Mammary epithelial cell (primary cell): ENCODE measurements at regions of chr20 and their contacts with region 1.

Region 1: DNA sequence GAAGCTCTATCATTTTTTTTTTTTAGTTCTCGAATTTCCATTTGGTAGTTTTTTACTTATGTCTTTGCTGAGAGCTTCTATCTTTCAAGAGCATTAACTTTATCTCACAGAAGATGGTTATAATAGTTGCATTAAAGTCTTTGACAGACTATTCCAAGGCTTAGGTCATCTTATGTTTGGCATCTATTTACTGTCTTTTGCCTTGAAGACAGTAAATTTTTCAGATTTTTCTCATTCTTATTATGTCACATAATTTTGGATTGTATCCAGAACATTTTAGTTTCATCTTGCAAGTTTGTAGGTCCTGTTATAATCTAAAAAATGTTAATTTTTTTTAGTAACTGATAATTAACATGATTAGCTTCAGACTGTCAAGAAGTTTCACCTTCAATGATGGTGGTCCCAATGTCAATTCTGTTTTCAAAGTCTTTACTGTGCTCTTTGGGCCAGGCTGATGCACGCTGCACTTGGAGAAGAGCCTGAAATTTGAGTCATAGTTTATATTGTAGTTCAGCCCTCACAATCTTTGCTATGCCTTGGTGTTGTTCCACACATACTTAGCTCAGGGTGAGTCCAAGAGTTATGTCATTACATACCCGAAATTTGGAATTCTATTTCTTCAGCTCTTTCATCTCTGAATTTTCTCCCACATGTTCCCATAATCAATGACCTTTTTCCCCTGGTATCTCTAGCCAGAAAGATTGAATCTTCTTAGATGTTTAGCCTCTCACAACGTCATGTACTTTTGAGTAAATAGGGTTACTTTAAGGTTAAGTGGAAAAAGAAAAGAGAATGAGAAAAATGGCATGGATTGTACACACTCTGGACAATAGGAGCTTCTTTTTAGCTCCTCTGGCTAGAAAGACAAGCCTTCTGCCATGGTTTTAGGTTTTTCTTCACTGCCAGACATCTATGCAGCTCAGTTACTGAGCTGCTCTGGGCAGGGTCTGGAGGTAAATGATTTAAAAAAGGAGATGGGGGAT is 110.3 kb upstream of the BTBD3 start:
- DNase-seq: peak; percentile 63
- H3K4me3 ChIP-seq: no peak overlapping the region
- H3K27ac ChIP-seq: no peak overlapping the region
- H3K4me1 ChIP-seq: peaks cover 30% of the 10 kb centered on the region
- H3K27me3 ChIP-seq: no peaks in the 10 kb centered on the region
- CTCF ChIP-seq: no peak

Region 2: DNA sequence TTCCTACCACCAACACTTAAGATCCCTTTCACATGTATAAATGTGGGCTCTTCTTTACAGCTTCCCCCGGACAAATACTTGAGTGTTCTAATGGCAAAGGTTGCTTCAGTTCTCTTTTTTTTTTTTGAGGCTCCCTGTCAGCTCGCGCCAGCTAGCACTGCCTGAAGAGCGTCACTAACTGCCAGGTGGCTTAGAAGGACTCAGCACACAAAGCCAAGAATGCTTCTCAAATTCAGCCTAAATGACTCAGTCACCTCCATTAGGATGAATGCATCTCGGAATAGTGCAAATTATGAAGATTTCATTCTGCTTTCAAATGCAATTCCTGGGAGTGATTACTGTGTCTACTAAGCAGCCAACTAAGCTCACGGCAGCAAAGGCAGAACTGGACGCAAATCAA is 40.4 kb before region 1 on chr20:
- CTCF ChIA-PET with region 1: no interaction called
- dilution Hi-C with region 1: no loop called
- in situ Hi-C with region 1: no loop called
- intact Hi-C with region 1: loop called (anchors 2 kb)
- DNase-seq: no peak
- H3K4me3 ChIP-seq: no peak overlapping the region
- H3K27ac ChIP-seq: no peak overlapping the region
- H3K4me1 ChIP-seq: peaks cover 4% of the 10 kb centered on the region
- H3K27me3 ChIP-seq: no peaks in the 10 kb centered on the region
- CTCF ChIP-seq: no peak

Region 3: DNA sequence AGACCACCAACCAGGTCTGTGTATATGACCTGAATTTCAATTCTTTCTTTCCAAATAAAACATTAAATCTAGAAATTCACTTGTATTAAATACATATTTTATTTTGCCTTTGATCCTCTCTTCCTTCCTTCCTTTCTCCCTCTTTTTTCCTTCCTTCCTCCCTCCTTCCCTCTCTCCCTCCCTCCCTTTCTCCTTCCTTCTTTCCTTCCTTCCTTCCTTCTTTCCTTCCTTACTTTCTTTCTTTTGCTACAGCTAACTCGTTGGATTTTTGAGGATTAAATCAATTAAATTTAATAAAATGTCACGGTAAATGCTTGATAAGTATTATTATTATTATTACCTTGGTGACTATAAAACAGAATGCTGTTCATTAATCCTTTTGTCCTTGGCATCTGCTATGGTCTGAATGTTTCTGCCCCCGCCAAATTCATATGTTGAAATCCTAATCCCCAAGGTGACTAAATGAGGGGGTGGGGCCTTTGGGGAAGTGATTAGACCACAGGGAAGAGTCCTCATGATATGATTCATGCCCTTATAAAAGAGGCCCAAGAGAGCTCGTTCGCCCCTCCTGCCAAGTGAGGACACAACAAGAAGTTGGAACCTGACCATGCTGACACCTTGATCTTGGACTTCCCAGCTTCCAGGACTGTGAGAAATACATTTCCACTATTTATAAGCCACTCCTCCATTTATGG is 42.8 kb after region 1 on chr20:
- CTCF ChIA-PET with region 1: no interaction called
- dilution Hi-C with region 1: no loop called
- in situ Hi-C with region 1: no loop called
- intact Hi-C with region 1: loop called (anchors 1 kb)
- DNase-seq: peak; percentile 93
- H3K4me3 ChIP-seq: peak overlapping the region in 2 of 3 experiments; percentile 39 to 41
- H3K27ac ChIP-seq: peak overlapping the region; percentile 89
- H3K4me1 ChIP-seq: peaks cover 43% of the 10 kb centered on the region
- H3K27me3 ChIP-seq: no peaks in the 10 kb centered on the region
- CTCF ChIP-seq: no peak

Region 4: DNA sequence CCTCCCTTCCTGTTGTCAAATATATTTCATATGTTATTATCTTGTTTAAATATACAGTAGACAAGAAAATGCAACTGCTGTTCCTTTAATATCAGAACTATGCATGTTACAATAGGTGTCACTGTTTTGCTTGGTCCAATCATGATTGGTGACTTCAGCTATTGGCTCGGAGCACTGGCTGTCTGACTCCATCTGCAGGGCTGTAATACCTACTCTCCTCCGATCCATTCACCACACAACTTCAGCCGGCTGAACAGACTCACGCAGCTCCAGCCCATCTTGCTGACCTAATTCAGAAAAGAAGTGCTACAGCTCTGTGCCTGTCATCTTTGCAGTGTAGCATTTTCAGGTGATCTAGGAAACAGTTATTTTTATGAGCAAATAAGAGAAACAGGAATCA is 110.3 kb after region 1 on chr20 and contains the start of gene BTBD3:
- CTCF ChIA-PET with region 1: no interaction called
- dilution Hi-C with region 1: no loop called
- in situ Hi-C with region 1: no loop called
- intact Hi-C with region 1: loop called (anchors 5 kb)
- DNase-seq: peak; percentile 83
- H3K4me3 ChIP-seq: peak within 1 kb of the TSS; percentile 22 to 33 (median 24)
- H3K27ac ChIP-seq: peak within 1 kb of the TSS; percentile 47
- H3K4me1 ChIP-seq: peaks cover 51% of the 10 kb centered on the region
- H3K27me3 ChIP-seq: no peaks in the 10 kb centered on the region
- CTCF ChIP-seq: peak in 1 of 2 donors; percentile 39
- total RNA-seq, gene BTBD3: 32.2 to 41.0 TPM